Heart right ventricle (tissue), 16 donors: ENCODE measurements at regions of chr11 and their contacts with region 1.

Region 1: GRCh38 chr11:129750349-129751292 is 65.0 kb upstream of the TMEM45B start:
- DNase-seq: peak; percentile 57 to 74
- ATAC-seq: peak; percentile 75 to 94 (median 90)
- H3K4me3 ChIP-seq: peak overlapping the region in 7 of 10 donors; percentile 12 to 41 (median 31)
- H3K27ac ChIP-seq: no peak overlapping the region
- H3K4me1 ChIP-seq: peaks cover 0 to 9% (median 4%) of the 10 kb centered on the region in 9 donors
- H3K27me3 ChIP-seq: peaks cover 0 to 30% (median 13%) of the 10 kb centered on the region in 7 donors
- CTCF ChIP-seq: peak; percentile 99 to 100 (median 99)

Region 2: DNA sequence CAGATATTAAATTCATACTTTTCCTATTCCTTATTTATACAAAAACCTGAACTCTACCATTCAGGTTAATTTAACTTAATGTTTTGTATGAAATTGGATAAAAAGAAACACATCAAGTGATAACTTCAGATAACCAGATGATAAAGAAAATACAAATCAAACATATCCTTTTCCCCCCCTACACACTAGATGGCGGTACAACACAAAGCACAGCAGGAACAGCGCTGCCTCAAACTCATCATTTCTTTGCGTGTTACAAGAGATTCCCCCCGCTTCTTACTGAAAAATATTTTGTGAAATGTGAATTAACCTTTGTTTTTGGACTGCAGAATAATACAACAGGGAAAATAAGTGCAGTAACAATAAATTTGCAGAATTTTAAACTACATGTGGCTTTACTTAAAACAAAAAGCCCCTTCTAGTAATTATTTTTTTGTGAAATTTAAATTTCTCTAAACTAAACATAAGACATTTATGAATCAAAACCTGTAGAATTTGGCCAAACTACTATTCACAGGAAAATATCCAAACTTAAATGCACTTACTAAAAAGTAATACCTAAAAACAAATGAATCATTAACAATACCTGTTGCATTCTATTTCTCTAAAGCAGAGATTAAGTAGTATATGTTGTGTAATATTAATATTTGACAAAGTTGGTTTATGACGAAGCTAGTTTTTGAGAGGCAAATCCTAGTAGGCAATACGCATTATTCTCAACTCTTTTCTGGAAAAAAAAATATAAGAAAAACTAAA is 632.8 kb before region 1 on chr11:
- intact Hi-C with region 1: loop called in 6 of 10 experiments (anchors 5 to 10 kb)
- DNase-seq: peak in 1 of 2 donors; percentile 35
- ATAC-seq: peak in 2 of 8 donors; percentile 57 to 67
- H3K4me3 ChIP-seq: no peak overlapping the region
- H3K27ac ChIP-seq: no peak overlapping the region
- H3K4me1 ChIP-seq: no peaks in the 10 kb centered on the region
- H3K27me3 ChIP-seq: no peaks in the 10 kb centered on the region
- CTCF ChIP-seq: peak; percentile 76 to 93 (median 86)

Region 3: GRCh38 chr11:129364143-129364654 is 386.4 kb before region 1 on chr11:
- intact Hi-C with region 1: loop called in 9 of 10 experiments (anchors 2 to 5 kb)
- DNase-seq: peak; percentile 69 to 72
- ATAC-seq: peak; percentile 71 to 98 (median 92)
- H3K4me3 ChIP-seq: no peak overlapping the region
- H3K27ac ChIP-seq: no peak overlapping the region
- H3K4me1 ChIP-seq: peaks cover 0 to 8% (median 0%) of the 10 kb centered on the region in 9 donors
- H3K27me3 ChIP-seq: peaks cover 0 to 88% (median 75%) of the 10 kb centered on the region in 7 donors
- CTCF ChIP-seq: peak; percentile 85 to 99 (median 96)

Region 4: GRCh38 chr11:129374993-129375750 is 375.4 kb before region 1 on chr11:
- intact Hi-C with region 1: loop called in 1 of 10 experiments (anchors 5 kb)
- DNase-seq: no peak
- ATAC-seq: peak in 2 of 8 donors; percentile 41 to 45
- H3K4me3 ChIP-seq: peak overlapping the region in 9 of 10 donors; percentile 18 to 48 (median 31)
- H3K27ac ChIP-seq: no peak overlapping the region
- H3K4me1 ChIP-seq: peaks cover 0 to 38% (median 25%) of the 10 kb centered on the region in 9 donors
- H3K27me3 ChIP-seq: peaks cover 29 to 99% (median 98%) of the 10 kb centered on the region in 7 donors
- CTCF ChIP-seq: no peak